Transverse colon (tissue), 4 donors: ENCODE measurements at regions of chr3 and their contacts with region 1.

Region 1: DNA sequence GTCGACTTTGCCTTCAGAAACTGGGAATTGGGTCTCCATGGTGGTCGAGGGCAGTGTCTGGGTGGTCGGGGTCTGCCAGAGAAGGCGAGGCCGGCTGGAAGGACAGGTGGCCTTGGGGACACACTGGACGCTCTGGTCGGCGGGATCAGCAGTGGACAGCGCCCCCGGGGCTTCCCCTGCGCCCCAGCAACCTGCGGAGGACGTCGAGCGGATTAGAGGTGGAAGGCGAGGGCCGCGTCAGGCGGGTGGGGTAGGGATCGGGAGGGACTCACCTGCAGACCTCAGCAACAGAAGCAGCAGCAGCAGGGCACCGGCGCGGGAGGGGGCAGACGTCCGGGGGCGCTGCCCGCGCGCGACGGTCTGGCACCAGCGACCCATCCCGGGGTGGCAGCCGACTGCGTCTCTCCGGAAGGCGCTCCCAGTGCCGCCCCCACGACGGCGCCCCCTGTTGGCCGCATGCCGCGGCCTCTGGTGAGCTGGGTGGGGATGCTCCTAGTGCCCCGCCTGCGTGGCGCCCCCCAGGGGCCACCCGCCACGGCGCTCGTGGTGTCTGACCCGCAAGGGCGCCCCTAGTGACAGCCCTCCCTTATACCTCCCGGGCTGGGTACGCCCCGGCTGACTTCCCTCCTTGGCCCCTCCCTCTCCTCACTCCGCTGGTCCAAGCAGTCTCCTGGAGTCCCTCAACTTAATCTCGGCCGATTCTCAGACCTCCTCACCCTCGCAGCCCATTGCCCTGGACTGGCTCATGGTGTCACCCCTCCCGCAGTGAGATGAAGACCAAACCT is at the start of gene PRSS50:
- DNase-seq: no peak
- H3K4me3 ChIP-seq: no peak within 1 kb of the TSS
- H3K27ac ChIP-seq: no peak within 1 kb of the TSS
- H3K4me1 ChIP-seq: no peaks in the 10 kb centered on the region
- H3K27me3 ChIP-seq: peaks cover 27% of the 10 kb centered on the region
- CTCF ChIP-seq: peak in 1 of 5 experiments; percentile 5
- EP300 ChIP-seq: no peak
- POLR2A ChIP-seq: no peak
- total RNA-seq, gene PRSS50: 0.14 TPM in 1 of 4 donors, not detected in the others

Region 2: DNA sequence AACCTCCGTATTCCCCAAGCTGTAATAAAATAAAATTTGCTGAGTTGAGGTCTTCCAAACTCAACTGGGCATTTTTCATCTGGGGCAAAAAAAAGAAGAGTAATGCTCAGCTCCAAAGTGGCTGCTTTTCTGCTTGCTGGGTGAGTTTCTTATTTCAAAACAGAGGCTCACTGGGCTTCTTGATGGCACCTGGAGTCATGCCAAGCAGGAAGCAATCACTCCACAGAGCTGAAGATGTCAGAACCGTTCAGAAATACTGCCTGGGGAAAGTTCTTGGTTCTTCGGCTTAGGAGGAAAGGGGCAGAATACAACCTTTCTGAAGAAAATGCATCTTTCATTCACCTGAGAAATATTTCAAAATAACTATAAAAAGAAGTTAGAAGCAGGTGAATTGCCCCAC is 827.2 kb before region 1 on chr3:
- in situ Hi-C with region 1: no loop called
- intact Hi-C with region 1: no loop called
- DNase-seq: peak; percentile 76
- H3K4me3 ChIP-seq: no peak overlapping the region
- H3K27ac ChIP-seq: no peak overlapping the region
- H3K4me1 ChIP-seq: peaks cover 0 to 4% (median 0%) of the 10 kb centered on the region in 4 donors
- H3K27me3 ChIP-seq: no peaks in the 10 kb centered on the region
- CTCF ChIP-seq: no peak
- EP300 ChIP-seq: no peak
- POLR2A ChIP-seq: no peak

Region 3: DNA sequence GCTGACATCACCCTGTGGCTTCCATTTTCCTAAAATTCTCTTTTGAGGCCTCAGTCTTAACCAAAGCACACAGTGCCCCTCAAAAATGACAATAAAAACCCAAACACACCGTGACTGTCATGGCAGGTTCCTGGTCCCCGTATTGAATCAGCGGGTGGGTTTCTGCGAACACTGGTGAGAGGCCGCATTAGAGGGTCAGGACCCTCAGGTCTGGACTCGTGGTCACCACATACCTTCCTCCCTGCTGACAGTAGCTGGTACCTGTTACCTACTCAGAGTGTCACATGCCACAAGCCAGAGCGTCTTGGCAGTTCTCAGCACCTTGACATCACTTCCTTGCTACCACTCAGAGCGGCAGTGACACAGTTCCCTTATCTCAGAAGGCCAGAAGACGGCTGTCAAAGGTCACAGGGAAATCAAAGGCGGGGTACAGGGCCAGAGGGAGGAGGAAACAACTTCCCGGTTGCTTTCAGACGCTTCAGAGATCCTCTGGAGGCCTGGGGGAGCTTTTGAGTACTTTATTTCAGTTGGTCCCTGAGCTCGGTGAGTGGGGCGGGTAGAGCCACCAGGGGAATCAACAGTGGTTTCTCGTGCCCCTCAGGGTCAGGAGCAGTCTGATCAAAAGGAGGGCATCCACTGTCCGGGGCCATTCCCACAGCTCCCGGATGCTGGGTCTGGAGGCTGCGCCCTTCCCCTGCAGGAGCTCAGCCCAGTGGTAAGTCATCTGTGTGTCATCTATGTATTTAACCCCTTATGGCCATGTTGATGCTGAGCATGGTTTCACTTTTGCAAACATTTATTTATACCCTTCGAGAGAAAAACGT is 310.6 kb before region 1 on chr3 and contains the starts of genes CCR5AS and CCRL2:
- in situ Hi-C with region 1: no loop called
- intact Hi-C with region 1: no loop called
- DNase-seq: peak; percentile 89
- H3K4me3 ChIP-seq: peak within 1 kb of the TSS in 3 of 4 donors; percentile 31 to 51 (median 32)
- H3K27ac ChIP-seq: peak within 1 kb of the TSS; percentile 82 to 95 (median 88)
- H3K4me1 ChIP-seq: peaks cover 0 to 46% (median 20%) of the 10 kb centered on the region in 4 donors
- H3K27me3 ChIP-seq: no peaks in the 10 kb centered on the region
- CTCF ChIP-seq: no peak
- EP300 ChIP-seq: no peak
- POLR2A ChIP-seq: peak; percentile 87
- total RNA-seq, gene CCRL2: 2.6 to 13.9 (median 9.8) TPM

Region 4: DNA sequence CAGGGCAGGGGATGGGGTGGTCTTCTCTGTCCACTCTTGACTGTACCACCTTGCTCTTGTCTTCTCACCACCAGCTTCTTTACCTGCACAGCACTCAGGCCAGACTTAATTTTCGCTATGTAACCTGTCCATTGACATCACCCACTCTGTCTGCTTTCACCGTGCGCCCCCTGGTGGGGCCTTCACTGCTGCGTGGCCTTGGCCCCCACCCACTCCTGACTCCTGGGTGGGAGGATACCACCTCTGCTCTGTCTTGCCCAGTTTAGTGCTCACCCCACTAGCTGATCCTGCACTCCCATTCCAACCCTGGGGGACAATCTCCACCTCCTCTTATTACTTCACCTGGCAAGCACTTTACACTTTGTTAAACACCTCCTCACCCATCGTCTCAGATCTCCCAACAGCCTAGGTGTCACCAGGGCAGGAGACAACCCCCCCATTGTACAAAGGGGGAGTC is 177.6 kb after region 1 on chr3:
- in situ Hi-C with region 1: loop called in 3 of 4 experiments (anchors 5 to 10 kb)
- intact Hi-C with region 1: no loop called
- DNase-seq: peak; percentile 74
- H3K4me3 ChIP-seq: no peak overlapping the region
- H3K27ac ChIP-seq: no peak overlapping the region
- H3K4me1 ChIP-seq: peaks cover 0 to 22% (median 22%) of the 10 kb centered on the region in 4 donors
- H3K27me3 ChIP-seq: peaks cover 35% of the 10 kb centered on the region
- CTCF ChIP-seq: peak; percentile 78 to 84 (median 82)
- EP300 ChIP-seq: no peak
- POLR2A ChIP-seq: no peak

Region 5: DNA sequence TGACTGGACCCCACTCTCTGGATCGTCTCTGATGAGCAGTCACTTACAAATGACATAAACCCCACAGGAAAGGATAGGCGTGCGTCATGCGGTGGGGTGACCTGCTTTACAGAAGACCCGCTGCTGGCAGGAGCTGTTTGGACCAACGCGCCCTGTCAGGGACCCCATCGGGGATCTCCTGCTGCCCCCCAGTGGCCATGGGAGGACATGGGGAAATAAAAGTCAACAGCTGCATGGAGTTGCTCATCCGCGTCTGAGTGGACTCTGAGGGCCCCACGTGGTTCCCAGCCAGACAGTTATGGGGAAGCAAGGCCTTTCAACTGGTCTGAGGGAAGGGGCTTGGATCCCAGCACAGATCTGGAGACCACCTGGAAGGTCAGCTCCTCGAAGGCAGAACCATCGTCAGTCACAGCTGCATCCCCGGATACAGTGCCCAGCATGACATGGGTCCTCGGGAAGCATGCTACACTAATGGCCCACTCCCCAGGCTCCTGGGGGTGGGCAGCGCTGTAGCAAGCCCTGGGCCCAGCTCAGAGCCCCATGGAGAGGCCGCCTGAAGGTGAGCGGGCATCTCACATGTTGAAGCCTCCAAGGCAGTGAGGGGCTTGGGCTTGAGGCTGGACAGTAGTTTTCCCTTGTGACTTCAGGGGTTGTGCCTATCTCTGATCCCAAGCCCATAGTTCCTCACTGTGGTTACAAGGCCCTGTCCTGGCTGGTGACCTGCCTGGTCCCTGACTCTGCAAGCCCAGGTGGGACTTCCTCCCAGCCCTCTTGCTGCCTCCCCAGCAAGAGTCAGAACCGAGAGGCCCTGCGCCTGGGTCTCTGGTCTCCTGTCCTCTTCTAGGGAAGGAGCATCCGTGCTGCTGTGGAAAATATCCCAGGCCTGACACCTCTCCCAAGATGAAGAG is 192.2 kb after region 1 on chr3:
- in situ Hi-C with region 1: loop called in 1 of 4 experiments (anchors 10 kb)
- intact Hi-C with region 1: no loop called
- DNase-seq: peak; percentile 79
- H3K4me3 ChIP-seq: no peak overlapping the region
- H3K27ac ChIP-seq: no peak overlapping the region
- H3K4me1 ChIP-seq: peaks cover 4 to 18% (median 13%) of the 10 kb centered on the region in 4 donors
- H3K27me3 ChIP-seq: no peaks in the 10 kb centered on the region
- CTCF ChIP-seq: peak; percentile 82 to 87 (median 85)
- EP300 ChIP-seq: no peak
- POLR2A ChIP-seq: no peak